GM10248 (cell line): ENCODE measurements at regions of chr3 and their contacts with region 1.

Region 1: DNA sequence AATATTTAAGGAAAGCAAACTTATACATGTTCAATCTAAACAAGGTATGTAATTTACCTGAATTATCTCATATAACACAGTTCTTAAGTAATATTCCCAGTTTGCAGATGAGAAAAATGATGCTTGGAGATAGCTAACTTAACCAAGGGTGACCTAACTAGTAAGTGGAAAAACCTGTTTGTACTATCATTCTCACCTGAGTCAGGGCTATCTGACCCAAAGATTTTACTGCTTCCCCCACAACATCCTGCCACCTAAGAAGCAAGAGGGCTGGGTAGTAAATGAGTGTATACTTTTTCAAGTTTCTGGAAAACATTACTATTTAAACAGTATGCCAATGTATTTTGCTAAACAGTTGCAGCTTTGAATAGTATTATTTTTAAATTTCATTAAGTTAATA is 10.6 kb downstream of the TP63 start:
- DNase-seq: no peak
- CTCF ChIP-seq: no peak

Region 2: GRCh38 chr3:189652042-189652441 is 10.3 kb after region 1 on chr3:
- CTCF ChIA-PET with region 1: interaction called, 17 read pairs
- POLR2A ChIA-PET with region 1: no interaction called
- DNase-seq: no peak
- CTCF ChIP-seq: no peak